IMR-90 (cell line): ENCODE measurements at regions of chr1 and their contacts with region 1.

Region 1: DNA sequence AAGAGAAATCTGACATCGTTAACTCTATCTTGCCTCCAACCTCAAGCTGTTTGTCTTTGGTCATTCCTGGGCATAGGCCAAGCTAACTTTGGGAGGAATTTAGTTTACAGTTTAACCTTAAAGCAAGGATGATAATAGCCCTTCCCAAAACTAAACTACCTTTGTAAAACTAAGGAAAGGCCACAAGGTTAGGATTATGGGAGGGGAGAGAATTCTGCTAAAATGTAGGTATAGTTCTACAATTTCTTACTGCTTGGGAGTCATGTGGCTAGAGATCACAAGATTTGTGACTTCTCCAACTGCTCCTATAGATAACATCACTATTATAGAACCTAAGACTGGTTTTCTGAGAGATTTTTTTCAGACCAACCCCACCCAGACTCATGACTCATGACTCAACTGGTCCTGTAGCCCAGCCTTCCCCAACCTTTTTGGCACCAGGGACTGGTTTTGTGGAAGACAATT is 70.6 kb upstream of the MUTYH start:
- DNase-seq: no peak
- ATAC-seq: no peak
- H3K4me3 ChIP-seq: no peak overlapping the region
- H3K27ac ChIP-seq: no peak overlapping the region
- H3K4me1 ChIP-seq: no peaks in the 10 kb centered on the region; the same call in 1 of the 2 replicates
- H3K27me3 ChIP-seq: no peaks in the 10 kb centered on the region; the same call in 1 of the 2 replicates
- CTCF ChIP-seq: no peak
- POLR2A ChIP-seq: no peak
- RAD21 ChIP-seq: no peak

Region 2: DNA sequence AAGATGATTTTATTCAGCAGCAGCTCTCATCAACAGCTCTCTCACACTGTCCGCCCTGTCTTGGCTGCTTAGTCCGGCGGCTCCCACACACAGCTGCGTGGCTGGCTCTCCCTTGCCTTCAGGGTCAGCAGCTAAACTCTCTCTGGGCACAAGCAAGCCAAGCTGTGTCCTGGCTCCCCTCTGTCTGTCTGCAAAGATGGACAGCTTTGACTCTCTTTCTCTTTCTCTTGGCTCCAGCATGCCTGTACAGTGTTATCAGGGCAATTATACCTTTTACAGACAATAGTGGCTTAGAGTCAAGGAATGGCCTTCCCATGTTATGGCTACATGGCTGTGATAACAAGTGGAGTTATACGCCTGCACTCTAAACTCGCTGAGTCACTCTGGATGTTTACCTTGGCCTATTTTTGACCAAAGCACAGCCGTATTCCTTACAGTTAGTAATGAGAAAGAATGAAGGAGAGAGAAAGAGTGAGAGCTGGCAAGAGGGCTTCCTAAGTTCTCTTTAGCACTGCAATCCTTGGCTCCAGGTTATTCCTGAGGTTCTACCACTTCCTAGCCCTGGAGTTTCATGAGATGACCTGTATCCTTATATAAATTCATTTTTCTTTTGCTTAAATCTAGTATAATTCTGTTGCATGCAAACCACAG is 144.6 kb before region 1 on chr1:
- CTCF ChIA-PET with region 1: no interaction called
- POLR2A ChIA-PET with region 1: no interaction called
- dilution Hi-C with region 1: no loop called
- in situ Hi-C with region 1: no loop called
- intact Hi-C with region 1: no loop called
- DNase-seq: peak; percentile 91
- ATAC-seq: peak; percentile 93
- H3K4me3 ChIP-seq: no peak overlapping the region
- H3K27ac ChIP-seq: peak overlapping the region; percentile 79
- H3K4me1 ChIP-seq: peaks cover 8% of the 10 kb centered on the region
- H3K27me3 ChIP-seq: no peaks in the 10 kb centered on the region
- CTCF ChIP-seq: no peak
- POLR2A ChIP-seq: no peak
- RAD21 ChIP-seq: no peak

Region 3: GRCh38 chr1:45423906-45424678 is 13.2 kb after region 1 on chr1:
- CTCF ChIA-PET with region 1: interaction called, 3 read pairs
- POLR2A ChIA-PET with region 1: no interaction called
- dilution Hi-C with region 1: no loop called
- in situ Hi-C with region 1: no loop called
- intact Hi-C with region 1: loop called (anchors 2 kb)
- DNase-seq: peak; percentile 13
- ATAC-seq: peak; percentile 80
- H3K4me3 ChIP-seq: no peak overlapping the region
- H3K27ac ChIP-seq: peak overlapping the region; percentile 48; the same call in 1 of the 2 replicates
- H3K4me1 ChIP-seq: peaks cover 2% of the 10 kb centered on the region; the same call in 1 of the 2 replicates
- H3K27me3 ChIP-seq: no peaks in the 10 kb centered on the region
- CTCF ChIP-seq: no peak
- POLR2A ChIP-seq: no peak
- RAD21 ChIP-seq: no peak